Posterior vena cava (tissue), 2 donors: ENCODE measurements at regions of chr10 and their contacts with region 1.

Region 1: DNA sequence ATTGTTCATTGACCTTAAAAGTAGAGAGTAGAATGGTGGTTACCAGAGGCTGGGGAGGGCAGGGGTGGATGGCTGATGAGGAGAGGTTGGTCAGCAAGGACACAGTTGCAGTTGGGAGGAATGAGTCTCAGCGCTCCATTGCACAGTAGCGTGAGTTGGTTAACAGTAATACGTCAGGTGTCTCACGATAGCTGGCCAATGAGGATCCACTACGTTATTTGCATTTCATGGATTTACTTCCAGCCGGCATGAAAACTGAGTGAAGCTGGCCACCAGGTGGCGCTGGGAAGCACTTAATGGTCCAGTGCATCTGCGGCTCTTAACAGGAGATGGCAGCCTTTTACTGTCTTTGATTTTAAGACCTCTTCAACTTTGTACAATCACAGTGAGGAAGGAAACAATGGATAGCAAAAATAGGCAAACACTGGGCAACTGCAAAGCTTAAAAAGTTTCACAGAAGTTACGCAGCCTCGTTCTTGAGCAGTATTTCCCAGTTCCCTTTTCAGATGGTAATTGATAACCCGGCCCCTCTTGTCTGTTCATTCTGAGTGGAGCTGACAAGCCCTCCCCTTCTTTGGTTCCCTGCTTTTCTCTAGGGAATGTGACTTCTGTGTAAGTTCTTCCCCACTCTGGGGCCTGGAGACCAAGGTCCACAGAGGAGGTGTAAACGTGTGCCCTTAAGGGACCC is 23.7 kb downstream of the AKR1E2 start:
- DNase-seq: peak; percentile 97

Region 2: DNA sequence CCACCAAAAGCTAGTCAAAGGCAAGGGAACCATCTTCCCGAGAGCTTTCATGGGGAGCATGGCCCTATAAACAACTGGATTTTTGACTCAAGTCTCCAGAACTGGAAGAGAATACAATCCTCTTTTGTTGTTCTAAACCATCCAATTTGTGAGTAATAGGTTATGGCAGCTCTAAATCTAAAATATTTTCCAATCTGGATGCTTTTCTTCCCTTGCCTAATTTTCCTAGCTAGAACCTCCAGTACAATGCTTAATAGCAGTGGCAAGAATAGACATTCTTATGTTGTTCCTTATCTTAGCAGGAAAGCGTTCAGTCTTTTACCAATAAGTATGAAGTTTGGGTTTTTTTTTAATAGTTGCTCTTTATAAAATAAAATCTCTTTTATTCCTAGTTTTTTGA is 43.0 kb after region 1 on chr10:
- intact Hi-C with region 1: no loop called
- DNase-seq: no peak

Region 3: DNA sequence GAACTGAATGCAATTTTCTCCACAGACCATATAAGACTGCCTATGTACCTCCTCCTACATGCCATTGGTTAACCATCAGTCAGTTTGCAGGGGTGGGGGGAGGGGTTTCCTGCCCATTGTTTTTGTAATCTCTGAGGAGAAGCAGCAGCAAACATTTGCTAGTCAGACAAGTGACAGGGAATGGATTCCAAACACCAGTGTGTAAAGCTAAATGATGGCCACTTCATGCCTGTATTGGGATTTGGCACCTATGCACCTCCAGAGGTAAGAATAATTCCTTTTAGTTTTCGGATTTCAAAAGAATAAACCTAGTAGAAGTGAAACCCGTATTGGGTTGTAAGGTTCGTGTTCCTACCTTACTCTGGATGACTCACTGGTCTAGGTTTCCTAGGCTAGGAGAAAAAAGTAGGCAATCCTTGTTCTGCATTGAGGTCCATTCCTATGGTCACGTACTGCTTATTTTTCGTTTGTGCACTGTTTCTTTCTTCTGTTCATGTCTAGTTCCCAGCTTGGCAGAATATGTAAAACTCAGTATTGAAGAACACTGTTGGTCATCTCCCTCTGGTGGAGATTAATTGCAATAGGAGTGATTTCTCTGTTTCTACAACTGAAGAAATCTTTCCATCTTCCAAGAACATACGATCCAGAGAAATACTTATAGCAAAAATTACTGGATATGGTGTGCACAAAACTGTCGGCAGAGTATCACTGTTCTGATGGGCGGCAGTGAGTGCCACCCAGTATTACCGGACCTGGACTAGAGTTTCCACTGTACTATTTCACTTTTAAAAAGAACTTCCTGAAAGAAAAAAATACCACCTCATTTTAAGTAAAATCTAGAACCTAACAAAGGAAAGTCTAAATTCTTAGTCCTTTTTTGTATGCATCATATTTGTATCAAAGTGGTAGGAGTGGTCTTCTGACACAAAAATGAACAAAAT is 244.8 kb after region 1 on chr10 and contains the start of gene AKR1C3:
- intact Hi-C with region 1: loop called (anchors 10 kb)
- DNase-seq: no peak
- total RNA-seq, gene AKR1C3: 21.0 to 29.6 TPM

Region 4: DNA sequence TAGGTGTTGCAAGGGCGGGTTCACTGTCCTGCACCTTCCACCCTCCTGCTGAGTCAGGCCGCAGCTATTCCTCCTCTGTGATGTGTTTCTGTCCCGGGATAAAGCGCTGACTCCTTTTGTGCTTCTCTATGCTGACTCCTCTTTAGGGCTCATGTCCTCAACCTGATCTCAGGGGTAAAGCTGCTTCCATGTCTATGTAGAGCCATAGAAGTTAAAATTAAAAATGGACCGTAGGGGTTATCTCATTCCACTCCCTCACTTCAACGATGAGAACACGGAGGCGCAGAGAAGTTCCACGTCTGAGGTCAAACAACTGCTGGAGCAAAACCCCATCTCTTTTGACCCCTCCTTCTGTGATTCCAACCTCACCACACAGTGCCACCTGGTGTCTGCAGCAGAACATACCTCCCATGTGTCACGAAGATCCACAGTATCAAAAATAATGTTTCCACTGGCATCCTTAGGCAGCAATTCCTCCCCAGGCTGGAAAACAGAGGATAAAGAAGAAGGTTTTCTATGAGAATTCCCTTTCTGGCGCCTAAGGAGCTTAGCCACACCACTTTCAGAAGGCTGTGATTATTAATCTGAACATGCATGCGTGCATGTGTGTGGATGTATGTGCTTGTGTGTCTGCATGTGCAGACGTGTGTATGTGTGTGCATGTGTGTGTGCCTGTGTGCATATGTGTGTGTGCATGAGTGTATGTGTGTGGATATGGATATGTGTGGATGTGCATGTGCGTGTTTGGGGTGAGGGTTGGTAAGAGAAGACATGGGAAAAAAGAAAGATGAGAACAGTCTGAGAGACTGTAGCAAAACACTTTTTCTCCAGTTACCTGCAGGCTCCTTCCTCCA is 433.8 kb after region 1 on chr10:
- intact Hi-C with region 1: loop called in 1 of 2 experiments (anchors 5 kb)
- DNase-seq: peak; percentile 82

Region 5: DNA sequence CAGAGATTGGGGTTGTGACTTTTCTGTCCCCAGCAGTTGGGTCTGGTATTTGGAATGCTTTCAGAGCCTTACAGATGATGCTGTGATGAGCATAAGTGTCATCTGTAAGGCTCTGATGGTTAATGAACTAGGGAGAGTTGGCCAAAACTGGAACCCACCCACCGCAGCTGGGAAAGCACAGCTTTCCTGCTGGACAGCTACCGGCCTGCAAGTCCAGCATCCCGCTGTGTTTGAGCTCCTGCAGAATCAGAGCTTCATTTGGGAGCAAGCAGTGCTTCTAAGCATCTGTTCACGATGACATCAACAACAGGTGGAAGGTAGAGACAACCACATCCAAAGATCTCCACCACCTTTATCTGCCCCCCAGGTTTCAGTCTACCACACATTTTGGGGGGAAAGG is 526.8 kb after region 1 on chr10:
- intact Hi-C with region 1: loop called in 1 of 2 experiments (anchors 10 kb)
- DNase-seq: no peak